Heart right ventricle (tissue), 16 donors: ENCODE measurements at regions of chr4 and their contacts with region 1.

Region 1: GRCh38 chr4:174365018-174365587 is 81.4 kb downstream of the CEP44 start:
- DNase-seq: peak in 1 of 2 donors; percentile 14
- ATAC-seq: no peak
- H3K4me3 ChIP-seq: no peak overlapping the region
- H3K27ac ChIP-seq: no peak overlapping the region
- H3K4me1 ChIP-seq: no peaks in the 10 kb centered on the region
- H3K27me3 ChIP-seq: no peaks in the 10 kb centered on the region
- CTCF ChIP-seq: peak in 8 of 9 donors; percentile 24 to 70 (median 52)

Region 2: GRCh38 chr4:174423257-174423944 is 58.3 kb after region 1 on chr4:
- intact Hi-C with region 1: no loop called
- DNase-seq: peak in 1 of 2 donors; percentile 44
- ATAC-seq: peak in 2 of 8 donors; percentile 37 to 85
- H3K4me3 ChIP-seq: no peak overlapping the region
- H3K27ac ChIP-seq: no peak overlapping the region
- H3K4me1 ChIP-seq: peaks cover 0 to 25% (median 11%) of the 10 kb centered on the region in 9 donors
- H3K27me3 ChIP-seq: no peaks in the 10 kb centered on the region
- CTCF ChIP-seq: no peak

Region 3: GRCh38 chr4:174631901-174632758 is 267.0 kb after region 1 on chr4:
- intact Hi-C with region 1: loop called (anchors 2 to 10 kb)
- DNase-seq: no peak
- ATAC-seq: no peak
- H3K4me3 ChIP-seq: no peak overlapping the region
- H3K27ac ChIP-seq: no peak overlapping the region
- H3K4me1 ChIP-seq: no peaks in the 10 kb centered on the region
- H3K27me3 ChIP-seq: no peaks in the 10 kb centered on the region
- CTCF ChIP-seq: peak; percentile 26 to 79 (median 73)

Region 4: GRCh38 chr4:174714393-174715211 is 349.5 kb after region 1 on chr4:
- intact Hi-C with region 1: loop called in 7 of 10 experiments (anchors 5 to 10 kb)
- DNase-seq: no peak
- ATAC-seq: peak in 2 of 8 donors; percentile 37 to 42
- H3K4me3 ChIP-seq: no peak overlapping the region
- H3K27ac ChIP-seq: no peak overlapping the region
- H3K4me1 ChIP-seq: peaks cover 0 to 7% (median 0%) of the 10 kb centered on the region in 9 donors
- H3K27me3 ChIP-seq: no peaks in the 10 kb centered on the region
- CTCF ChIP-seq: peak; percentile 6 to 69 (median 58)

Region 5: DNA sequence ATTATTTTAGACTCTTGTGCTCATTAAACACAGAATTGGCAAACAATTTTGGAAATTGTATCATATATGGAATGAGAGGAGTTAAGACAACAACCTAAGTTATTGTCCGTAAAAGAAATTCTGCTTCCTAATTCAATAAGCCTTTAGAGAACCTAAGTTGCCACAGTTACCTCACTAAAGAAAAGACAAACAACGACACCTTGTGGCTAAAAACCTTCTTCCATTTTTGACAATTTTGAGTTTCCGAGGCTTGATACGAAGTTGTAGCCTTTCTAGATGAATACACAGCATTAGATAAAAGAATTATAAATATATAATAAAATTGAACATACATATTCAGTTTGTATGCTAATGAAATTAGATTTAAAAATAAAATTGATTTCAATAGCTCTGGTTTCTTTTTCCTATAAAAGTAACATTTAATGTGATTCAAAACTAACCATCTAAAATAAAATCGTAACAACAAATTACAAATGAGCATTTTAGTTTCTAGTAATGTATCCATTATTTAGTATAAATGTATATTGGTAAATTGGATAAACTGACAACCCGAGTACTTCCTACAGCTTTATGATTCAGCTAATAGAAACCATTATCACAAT is 1171.8 kb after region 1 on chr4:
- intact Hi-C with region 1: loop called in 1 of 10 experiments (anchors 5 kb)
- DNase-seq: no peak
- ATAC-seq: no peak
- H3K4me3 ChIP-seq: no peak overlapping the region
- H3K27ac ChIP-seq: no peak overlapping the region
- H3K4me1 ChIP-seq: no peaks in the 10 kb centered on the region
- H3K27me3 ChIP-seq: no peaks in the 10 kb centered on the region
- CTCF ChIP-seq: peak in 8 of 9 donors; percentile 25 to 63 (median 52)